Panc1 (cell line): ENCODE measurements at regions of chr1 and their contacts with region 1.

Region 1: GRCh38 chr1:30191154-30191702 is 532.2 kb downstream of the MATN1 start:
- DNase-seq: no peak
- ATAC-seq: peak; percentile 54; the same call in 1 of the 2 replicates
- H3K4me3 ChIP-seq: no peak overlapping the region
- H3K27ac ChIP-seq: no peak overlapping the region
- H3K4me1 ChIP-seq: no peaks in the 10 kb centered on the region
- H3K27me3 ChIP-seq: no peaks in the 10 kb centered on the region; the same call in 1 of the 2 replicates
- CTCF ChIP-seq: no peak

Region 2: GRCh38 chr1:30213936-30214335 is 22.7 kb after region 1 on chr1:
- CTCF ChIA-PET with region 1: no interaction called
- POLR2A ChIA-PET with region 1: no interaction called
- in situ Hi-C with region 1: no loop called
- intact Hi-C with region 1: loop called (anchors 1 kb)
- DNase-seq: no peak
- ATAC-seq: no peak
- H3K4me3 ChIP-seq: no peak overlapping the region
- H3K27ac ChIP-seq: no peak overlapping the region
- H3K4me1 ChIP-seq: no peaks in the 10 kb centered on the region
- H3K27me3 ChIP-seq: peaks cover 14% of the 10 kb centered on the region; the same call in 1 of the 2 replicates
- CTCF ChIP-seq: no peak

Region 3: GRCh38 chr1:30225357-30225756 is 34.1 kb after region 1 on chr1:
- CTCF ChIA-PET with region 1: no interaction called
- POLR2A ChIA-PET with region 1: no interaction called
- in situ Hi-C with region 1: no loop called
- intact Hi-C with region 1: no loop called
- DNase-seq: no peak
- ATAC-seq: no peak
- H3K4me3 ChIP-seq: no peak overlapping the region
- H3K27ac ChIP-seq: no peak overlapping the region
- H3K4me1 ChIP-seq: no peaks in the 10 kb centered on the region
- H3K27me3 ChIP-seq: peaks cover 3% of the 10 kb centered on the region
- CTCF ChIP-seq: no peak